Activated T-helper 1 cell treated with anti-CD3 and anti-CD28 coated beads, Interleukin-12 subunit alpha, Interleukin-12 subunit beta, Interleukin-2, Interleukin-4 antibody, amounts not matched to agents 30 ng/mL and 10 ng/mL and 1 ng/mL, durations not matched to agents 14 hours and 24 hours and 36 hours (primary cell): ENCODE measurements at regions of chr5 and their contacts with region 1.

Region 1: DNA sequence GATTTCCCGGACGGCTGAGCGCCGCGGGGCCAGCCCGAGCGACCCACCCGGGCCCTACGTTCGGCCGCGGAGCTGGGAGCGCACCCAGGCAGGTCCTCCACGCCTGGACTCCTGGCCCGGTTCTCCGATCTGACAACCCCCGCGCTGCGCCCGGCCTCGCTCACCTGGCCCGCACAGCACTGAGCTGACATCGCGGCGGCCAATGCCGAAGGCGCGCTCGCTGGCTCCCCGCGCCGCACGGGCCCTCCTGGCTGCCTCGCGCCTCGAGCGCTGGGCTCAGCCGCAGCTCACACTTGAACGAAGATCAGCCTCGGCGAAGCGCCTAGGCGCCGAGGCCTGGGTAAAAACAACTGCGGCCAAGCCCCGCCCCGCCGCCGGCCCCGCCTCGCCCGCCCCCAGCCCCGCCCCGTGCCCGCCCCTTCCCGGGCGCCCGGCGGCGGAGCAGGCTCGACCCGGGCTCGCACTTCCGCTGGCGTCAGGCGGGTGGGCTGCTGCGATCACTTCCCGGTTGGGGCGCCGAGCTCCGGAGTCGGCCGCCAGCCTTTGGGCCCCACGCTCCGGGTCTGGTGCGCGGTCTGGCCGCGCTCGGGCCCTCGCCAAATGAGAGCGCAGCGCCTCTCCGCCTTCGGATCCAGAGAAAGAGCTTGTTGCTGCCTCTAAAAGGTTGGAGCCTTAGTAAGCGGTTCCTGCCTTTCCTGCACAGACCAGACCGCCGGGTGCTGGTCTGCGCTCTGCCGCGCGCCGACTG is at the start of gene SERINC5:
- DNase-seq: peak; percentile 83
- H3K4me3 Mint-ChIP-seq: peak within 1 kb of the TSS; percentile 96
- H3K27ac Mint-ChIP-seq: peak within 1 kb of the TSS; percentile 99
- H3K4me1 Mint-ChIP-seq: peaks cover 51% of the 10 kb centered on the region
- H3K27me3 Mint-ChIP-seq: no peaks in the 10 kb centered on the region
- total RNA-seq, gene SERINC5: 21.2 and 22.8 TPM in 2 replicates

Region 2: DNA sequence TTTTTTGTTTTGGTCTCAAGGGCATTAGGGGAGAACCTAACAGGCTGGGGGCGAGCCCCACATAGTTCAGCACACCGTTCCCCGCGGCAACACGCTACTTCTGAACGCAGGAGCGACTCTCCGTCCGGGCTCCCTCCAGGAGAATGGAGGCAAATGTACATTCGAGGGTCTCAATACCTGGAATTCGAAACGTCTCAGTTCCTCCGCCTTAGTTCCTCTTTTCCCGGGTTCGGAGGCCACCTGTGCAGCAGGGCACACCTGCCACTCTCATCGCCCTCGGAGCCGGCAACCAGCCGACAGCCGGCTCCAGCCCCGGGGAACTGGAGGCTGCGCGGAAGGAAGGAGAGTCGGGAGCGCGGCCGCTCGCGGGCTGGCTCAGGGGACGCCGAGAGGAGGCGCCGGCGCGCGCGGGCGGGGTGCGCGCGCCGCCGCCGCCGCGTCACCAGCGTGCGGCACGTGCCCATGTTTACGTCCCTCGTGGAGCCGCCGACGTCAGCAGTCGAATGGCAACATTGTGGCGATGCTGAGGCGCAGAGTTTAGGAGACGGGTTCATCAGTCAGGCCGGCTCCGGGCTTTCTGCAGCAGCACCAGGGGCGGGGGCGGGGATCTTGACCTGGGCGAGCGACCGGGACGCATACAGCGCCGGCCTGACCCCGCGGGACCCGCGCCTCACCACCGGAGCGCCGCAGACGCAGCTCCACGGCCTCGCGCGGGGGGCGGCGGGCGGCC is 1020.1 kb before region 1 on chr5 and contains the start of gene JMY:
- intact Hi-C with region 1: loop called (anchors 5 kb)
- DNase-seq: peak; percentile 77
- H3K4me3 Mint-ChIP-seq: peak within 1 kb of the TSS; percentile 94
- H3K27ac Mint-ChIP-seq: peak within 1 kb of the TSS; percentile 95
- H3K4me1 Mint-ChIP-seq: peaks cover 33% of the 10 kb centered on the region
- H3K27me3 Mint-ChIP-seq: peaks cover 2% of the 10 kb centered on the region
- total RNA-seq, gene JMY: 5.5 and 5.9 TPM in 2 replicates

Region 3: DNA sequence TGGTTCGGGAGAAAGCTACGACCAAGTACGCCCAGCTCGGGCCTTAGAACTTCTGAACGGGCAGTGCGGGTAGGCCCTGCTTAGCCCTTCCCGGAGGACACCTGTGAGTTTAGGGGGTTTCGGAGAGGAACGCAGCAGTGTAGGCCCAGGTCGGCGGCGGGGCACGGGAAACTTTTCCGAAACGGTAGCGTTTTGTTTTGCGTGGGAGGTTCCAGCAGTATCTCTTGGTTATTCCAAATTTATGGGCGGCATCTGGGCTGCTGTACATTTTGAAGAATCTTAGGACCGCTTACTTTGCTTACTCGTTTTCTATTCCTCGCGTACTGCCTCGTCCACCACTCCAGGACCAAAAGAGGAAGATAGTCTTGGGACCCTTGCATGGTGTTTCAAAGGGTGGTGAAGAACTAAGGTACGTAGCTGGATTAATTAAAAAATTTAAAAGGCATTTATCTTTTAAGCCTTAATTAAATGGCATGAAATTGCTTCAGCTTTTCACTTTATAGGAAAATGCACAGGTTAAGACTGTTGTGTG is 643.2 kb before region 1 on chr5:
- intact Hi-C with region 1: loop called (anchors 2 kb)
- DNase-seq: no peak
- H3K4me3 Mint-ChIP-seq: peak overlapping the region; percentile 91
- H3K27ac Mint-ChIP-seq: peak overlapping the region; percentile 97
- H3K4me1 Mint-ChIP-seq: peaks cover 45% of the 10 kb centered on the region
- H3K27me3 Mint-ChIP-seq: no peaks in the 10 kb centered on the region

Region 4: DNA sequence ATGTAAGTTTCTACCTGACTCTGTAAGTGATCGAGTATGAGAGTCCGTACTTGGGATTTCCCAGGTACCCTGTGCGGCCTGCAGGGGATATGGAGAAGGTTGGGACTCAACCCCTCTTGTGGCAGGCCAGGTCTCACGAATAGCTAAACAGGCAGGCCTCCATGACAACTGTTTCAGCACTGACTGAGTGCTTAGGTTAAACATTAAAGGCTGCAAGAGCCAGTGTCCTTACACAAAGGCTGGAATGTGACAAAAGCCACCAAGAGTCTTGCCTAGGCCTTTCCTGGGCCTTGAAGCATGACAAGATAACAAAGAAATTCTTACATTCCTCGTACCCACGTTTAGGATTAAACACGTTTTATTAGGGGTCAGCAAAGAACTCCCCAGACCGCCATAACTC is 162.1 kb before region 1 on chr5:
- intact Hi-C with region 1: loop called (anchors 5 kb)
- DNase-seq: no peak
- H3K4me3 Mint-ChIP-seq: no peak overlapping the region
- H3K27ac Mint-ChIP-seq: no peak overlapping the region
- H3K4me1 Mint-ChIP-seq: peaks cover 15% of the 10 kb centered on the region
- H3K27me3 Mint-ChIP-seq: no peaks in the 10 kb centered on the region

Region 5: DNA sequence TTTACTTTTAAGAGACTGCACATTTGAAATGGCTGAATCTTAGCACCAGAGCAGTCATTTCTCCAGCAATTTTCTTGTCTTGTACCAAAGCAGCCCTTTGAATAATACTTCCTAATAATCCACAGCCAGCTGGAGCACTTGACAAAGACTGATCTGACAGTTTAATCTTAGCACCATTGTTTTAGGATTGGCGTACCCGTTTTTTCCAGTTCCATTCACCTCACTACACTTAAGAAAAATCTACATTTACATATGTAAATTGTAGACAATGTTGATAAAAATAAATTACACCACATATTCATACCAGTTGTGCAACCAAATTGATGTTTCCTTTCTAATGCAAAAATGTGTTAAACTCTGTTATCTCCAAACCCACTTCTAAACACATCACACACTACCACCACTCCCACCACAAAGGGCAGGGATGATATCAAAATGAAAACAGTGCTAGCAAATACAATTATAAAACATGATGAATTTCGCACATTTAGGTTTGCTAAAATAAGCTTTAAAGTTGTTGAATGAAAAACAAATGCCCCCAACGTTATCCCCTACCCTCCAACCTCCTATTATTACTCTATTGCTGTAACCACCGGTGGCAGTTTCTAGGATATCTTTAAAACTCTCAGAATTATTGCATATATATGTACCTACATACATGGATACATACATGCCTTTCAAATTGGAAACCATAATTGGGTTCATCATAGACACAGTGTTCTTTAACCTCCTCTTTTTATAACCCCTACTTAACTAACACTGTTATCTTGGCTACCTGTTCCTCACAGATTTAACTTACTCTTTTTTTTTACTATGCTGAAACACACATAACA is 21.6 kb before region 1 on chr5:
- intact Hi-C with region 1: loop called (anchors 2 kb)
- DNase-seq: no peak
- H3K4me3 Mint-ChIP-seq: no peak overlapping the region
- H3K27ac Mint-ChIP-seq: peak overlapping the region; percentile 25
- H3K4me1 Mint-ChIP-seq: peaks cover 35% of the 10 kb centered on the region
- H3K27me3 Mint-ChIP-seq: no peaks in the 10 kb centered on the region

Region 6: DNA sequence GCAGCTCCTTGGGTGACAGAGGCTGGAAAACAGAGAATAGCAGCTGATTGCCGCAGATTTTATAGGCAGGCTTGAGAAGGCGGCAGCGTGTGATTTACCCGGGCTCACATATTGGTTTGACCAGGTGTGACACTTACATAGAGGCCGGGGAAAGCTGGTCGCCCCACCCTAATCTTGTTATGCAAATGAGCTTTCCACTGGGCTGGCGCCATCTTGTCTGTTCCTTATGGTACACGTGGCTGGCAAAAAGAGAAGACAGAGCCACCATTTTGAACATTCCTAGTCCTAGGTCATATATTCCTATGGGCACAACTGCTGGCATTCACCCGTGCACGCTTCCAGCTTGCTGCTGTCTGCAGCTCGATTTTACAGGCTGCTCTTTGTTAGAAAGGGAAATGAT is 52.6 kb after region 1 on chr5:
- intact Hi-C with region 1: loop called (anchors 2 kb)
- DNase-seq: no peak
- H3K4me3 Mint-ChIP-seq: no peak overlapping the region
- H3K27ac Mint-ChIP-seq: no peak overlapping the region
- H3K4me1 Mint-ChIP-seq: no peaks in the 10 kb centered on the region
- H3K27me3 Mint-ChIP-seq: peaks cover 8% of the 10 kb centered on the region

Region 7: GRCh38 chr5:80337379-80337778 is 81.5 kb after region 1 on chr5:
- intact Hi-C with region 1: no loop called
- DNase-seq: no peak
- H3K4me3 Mint-ChIP-seq: no peak overlapping the region
- H3K27ac Mint-ChIP-seq: no peak overlapping the region
- H3K4me1 Mint-ChIP-seq: no peaks in the 10 kb centered on the region
- H3K27me3 Mint-ChIP-seq: peaks cover 14% of the 10 kb centered on the region

Region 8: DNA sequence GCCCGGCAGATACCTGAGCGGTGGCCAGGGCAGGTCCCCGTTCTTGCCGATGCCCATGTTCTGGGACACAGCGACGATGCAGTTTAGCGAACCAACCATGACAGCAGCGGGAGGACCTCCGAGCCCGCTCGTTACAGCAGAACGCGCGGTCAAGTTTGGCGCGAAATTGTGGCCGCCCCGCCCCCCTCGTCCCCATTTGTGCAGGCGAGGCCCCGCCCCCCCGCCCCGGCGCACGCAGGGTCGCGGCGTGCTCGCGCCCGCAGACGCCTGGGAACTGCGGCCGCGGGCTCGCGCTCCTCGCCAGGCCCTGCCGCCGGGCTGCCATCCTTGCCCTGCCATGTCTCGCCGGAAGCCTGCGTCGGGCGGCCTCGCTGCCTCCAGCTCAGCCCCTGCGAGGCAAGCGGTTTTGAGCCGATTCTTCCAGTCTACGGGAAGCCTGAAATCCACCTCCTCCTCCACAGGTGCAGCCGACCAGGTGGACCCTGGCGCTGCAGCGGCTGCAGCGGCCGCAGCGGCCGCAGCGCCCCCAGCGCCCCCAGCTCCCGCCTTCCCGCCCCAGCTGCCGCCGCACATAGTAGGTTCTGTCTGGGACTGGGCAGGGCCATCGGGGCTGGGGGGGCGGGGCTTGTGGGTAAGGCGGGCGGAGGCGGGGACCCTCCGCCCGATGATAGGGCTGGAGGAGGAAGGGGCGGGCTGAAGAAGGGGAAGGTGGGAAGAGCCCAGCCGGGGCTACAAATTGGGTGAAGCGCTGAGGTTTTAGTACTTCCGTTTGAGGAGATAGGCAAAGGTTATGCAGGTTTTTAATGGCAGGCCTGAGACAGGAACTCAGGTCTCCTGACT is 398.7 kb after region 1 on chr5 and contains the starts of genes DHFR and MSH3:
- intact Hi-C with region 1: loop called (anchors 5 kb)
- DNase-seq: peak; percentile 84
- H3K4me3 Mint-ChIP-seq: peak within 1 kb of the TSS; percentile 93
- H3K27ac Mint-ChIP-seq: peak within 1 kb of the TSS; percentile 98
- H3K4me1 Mint-ChIP-seq: peaks cover 37% of the 10 kb centered on the region
- H3K27me3 Mint-ChIP-seq: no peaks in the 10 kb centered on the region
- total RNA-seq, gene DHFR: 55.9 and 60.3 TPM in 2 replicates
- total RNA-seq, gene MSH3: 20.2 and 20.7 TPM in 2 replicates